Heart left ventricle (tissue), 16 donors: ENCODE measurements at regions of chr17 and their contacts with region 1.

Region 1: DNA sequence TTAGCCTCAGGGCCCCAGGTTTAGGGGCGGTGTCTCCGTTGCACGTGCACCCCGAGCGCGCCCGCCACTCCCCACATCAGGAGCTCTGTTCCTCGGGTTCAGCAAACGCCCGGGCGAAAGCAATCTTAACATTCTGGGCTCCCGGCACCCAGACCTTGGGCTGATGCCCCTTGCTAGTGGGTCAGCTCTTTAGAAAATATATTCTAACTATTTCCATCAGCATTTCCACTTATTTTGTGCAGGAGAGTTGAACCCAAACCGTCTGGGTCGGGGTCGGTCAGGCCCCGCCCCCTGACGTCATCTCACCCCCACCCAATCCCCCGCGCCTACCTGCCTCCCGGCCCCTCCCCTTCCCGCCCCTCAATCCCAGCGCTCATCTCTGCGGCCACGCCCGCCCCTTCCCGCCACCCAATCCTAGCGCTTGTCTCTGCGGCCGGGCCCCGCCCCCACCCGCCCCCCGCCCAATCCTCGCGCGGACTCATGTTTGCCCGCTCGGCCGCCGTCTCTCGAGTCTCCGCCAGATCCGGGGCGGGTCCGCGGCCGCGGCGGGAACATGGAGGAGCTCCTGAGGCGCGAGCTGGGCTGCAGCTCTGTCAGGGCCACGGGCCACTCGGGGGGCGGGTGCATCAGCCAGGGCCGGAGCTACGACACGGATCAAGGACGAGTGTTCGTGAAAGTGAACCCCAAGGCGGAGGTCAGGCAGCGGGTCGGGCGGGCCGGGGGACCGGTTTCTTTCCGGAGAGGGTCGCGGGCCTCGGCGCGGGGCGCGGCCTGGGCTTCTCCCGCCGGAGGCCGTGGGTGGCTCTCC is at the start of gene FN3KRP:
- DNase-seq: peak; percentile 90 to 97 (median 97)
- ATAC-seq: peak; percentile 94 to 99 (median 97)
- H3K4me3 ChIP-seq: peak within 1 kb of the TSS; percentile 59 to 98 (median 94)
- H3K27ac ChIP-seq: peak within 1 kb of the TSS in 11 of 12 donors; percentile 42 to 81 (median 63)
- H3K4me1 ChIP-seq: peaks cover 3 to 22% (median 16%) of the 10 kb centered on the region in 12 donors
- H3K27me3 ChIP-seq: no peaks in the 10 kb centered on the region
- CTCF ChIP-seq: no peak
- POLR2A ChIP-seq: no peak
- total RNA-seq, gene FN3KRP: 6.8 to 20.3 (median 15.8) TPM

Region 2: DNA sequence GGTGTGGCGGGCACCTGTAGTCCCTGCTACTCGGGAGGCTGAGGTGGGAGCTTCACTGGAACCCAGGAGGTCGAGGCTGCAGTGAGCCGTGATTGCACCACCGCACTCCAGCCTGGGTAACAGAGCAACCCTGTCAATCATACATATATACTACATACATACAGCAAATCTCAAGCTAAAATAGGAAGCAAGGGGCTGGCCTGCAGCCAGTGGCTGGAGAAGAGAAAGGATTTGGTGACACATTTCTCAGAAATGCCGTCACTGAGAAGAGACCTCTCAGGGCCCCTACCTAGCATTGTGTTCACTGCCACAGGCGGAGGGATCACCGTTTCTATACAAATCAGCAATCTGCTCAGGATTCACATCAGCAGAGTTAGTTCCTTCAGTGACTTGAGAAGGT is 240.9 kb before region 1 on chr17:
- intact Hi-C with region 1: no loop called
- DNase-seq: no peak
- ATAC-seq: no peak
- H3K4me3 ChIP-seq: no peak overlapping the region
- H3K27ac ChIP-seq: no peak overlapping the region
- H3K4me1 ChIP-seq: no peaks in the 10 kb centered on the region
- H3K27me3 ChIP-seq: no peaks in the 10 kb centered on the region
- CTCF ChIP-seq: no peak
- POLR2A ChIP-seq: no peak

Region 3: GRCh38 chr17:82648166-82648668 is 68.2 kb before region 1 on chr17 and contains the start of gene WDR45B:
- intact Hi-C with region 1: loop called in 2 of 10 experiments (anchors 2 to 5 kb)
- DNase-seq: peak; percentile 96 to 98 (median 97)
- ATAC-seq: peak; percentile 95 to 98 (median 97)
- H3K4me3 ChIP-seq: peak within 1 kb of the TSS; percentile 76 to 100 (median 98)
- H3K27ac ChIP-seq: peak within 1 kb of the TSS; percentile 87 to 99 (median 96)
- H3K4me1 ChIP-seq: peaks cover 0 to 40% (median 20%) of the 10 kb centered on the region in 12 donors
- H3K27me3 ChIP-seq: no peaks in the 10 kb centered on the region
- CTCF ChIP-seq: no peak
- POLR2A ChIP-seq: peak; percentile 61 to 95
- total RNA-seq, gene WDR45B: 33.9 to 48.2 (median 40.1) TPM

Region 4: DNA sequence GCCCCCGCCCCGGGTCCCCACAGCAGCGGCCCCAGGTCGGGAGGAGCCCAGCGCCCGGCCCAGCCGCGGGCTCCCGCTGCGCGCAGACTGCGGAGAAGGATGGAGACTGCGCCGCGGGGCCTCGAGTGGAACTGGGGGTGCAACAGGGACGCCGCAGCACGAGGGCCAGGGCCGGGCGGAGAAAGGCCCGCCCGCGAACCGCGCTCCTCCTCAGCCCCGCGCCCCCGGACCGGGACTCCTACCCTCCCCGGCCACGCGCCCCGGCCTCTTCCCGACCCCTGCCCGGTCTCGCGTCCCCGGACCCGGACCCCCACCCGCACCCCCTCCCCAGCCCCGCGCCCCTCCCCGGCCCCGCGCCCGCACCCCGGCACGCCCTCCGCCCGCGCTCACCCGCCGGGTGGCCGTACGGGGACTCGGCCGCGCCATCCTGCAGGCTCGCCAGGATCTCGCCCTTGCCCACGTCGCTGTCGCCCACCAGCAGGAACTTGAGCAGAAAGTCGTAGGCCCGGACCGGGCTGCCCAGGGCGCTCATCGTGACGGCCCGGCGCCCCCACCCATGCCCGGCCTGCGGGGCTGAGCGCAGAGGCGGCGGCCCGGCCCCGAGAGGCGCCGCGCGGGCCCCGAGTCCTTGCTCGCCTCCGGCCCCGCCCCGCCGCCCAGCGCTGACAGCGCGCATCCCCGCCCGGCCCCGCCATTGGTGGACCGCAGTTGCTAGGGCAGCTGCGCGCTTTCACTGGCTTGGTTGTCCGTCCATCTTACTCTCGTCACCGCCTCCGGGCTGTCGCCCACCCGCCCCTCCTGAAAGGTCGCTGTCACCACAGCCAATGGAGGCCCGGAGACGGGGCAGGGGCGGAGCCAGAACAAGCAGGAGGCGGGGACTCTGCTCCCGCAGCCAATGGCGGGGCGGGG is 18.1 kb before region 1 on chr17 and contains the start of gene RAB40B:
- intact Hi-C with region 1: loop called in 2 of 10 experiments (anchors 1 to 2 kb)
- DNase-seq: peak; percentile 99 to 100 (median 100)
- ATAC-seq: peak; percentile 99 to 100 (median 100)
- H3K4me3 ChIP-seq: peak within 1 kb of the TSS; percentile 65 to 98 (median 80)
- H3K27ac ChIP-seq: peak within 1 kb of the TSS in 10 of 12 donors; percentile 46 to 85 (median 68)
- H3K4me1 ChIP-seq: peaks cover 0 to 22% (median 15%) of the 10 kb centered on the region in 12 donors
- H3K27me3 ChIP-seq: peaks cover 0 to 6% (median 0%) of the 10 kb centered on the region in 9 donors
- CTCF ChIP-seq: no peak
- POLR2A ChIP-seq: peak; percentile 42 to 65
- total RNA-seq, gene RAB40B: 15.2 to 37.7 (median 23.7) TPM

Region 5: GRCh38 chr17:82751571-82752370 is 35.4 kb after region 1 on chr17 and contains the start of gene TBCD:
- intact Hi-C with region 1: loop called in 1 of 10 experiments (anchors 5 kb)
- DNase-seq: peak; percentile 89 to 94 (median 91)
- ATAC-seq: peak; percentile 59 to 91 (median 88)
- H3K4me3 ChIP-seq: peak within 1 kb of the TSS; percentile 70 to 100 (median 82)
- H3K27ac ChIP-seq: peak within 1 kb of the TSS; percentile 33 to 95 (median 82)
- H3K4me1 ChIP-seq: peaks cover 6 to 19% (median 12%) of the 10 kb centered on the region in 12 donors
- H3K27me3 ChIP-seq: no peaks in the 10 kb centered on the region
- CTCF ChIP-seq: no peak
- POLR2A ChIP-seq: peak in 1 of 2 donors; percentile 56
- total RNA-seq, gene TBCD: 36.9 to 98.4 (median 54.9) TPM